Aorta (tissue), 5 donors: ENCODE measurements at regions of chr17 and their contacts with region 1.

Region 1: GRCh38 chr17:57255776-57256681 is at the start of gene MSI2:
- DNase-seq: peak; percentile 94 to 97
- ATAC-seq: peak; percentile 94
- H3K4me3 ChIP-seq: peak within 1 kb of the TSS; percentile 97
- H3K27ac ChIP-seq: peak within 1 kb of the TSS; percentile 69 to 92
- H3K4me1 ChIP-seq: peaks cover 2 to 4% of the 10 kb centered on the region in 2 donors
- H3K27me3 ChIP-seq: no peaks in the 10 kb centered on the region
- total RNA-seq, gene MSI2: 47.2 to 48.2 TPM

Region 2: DNA sequence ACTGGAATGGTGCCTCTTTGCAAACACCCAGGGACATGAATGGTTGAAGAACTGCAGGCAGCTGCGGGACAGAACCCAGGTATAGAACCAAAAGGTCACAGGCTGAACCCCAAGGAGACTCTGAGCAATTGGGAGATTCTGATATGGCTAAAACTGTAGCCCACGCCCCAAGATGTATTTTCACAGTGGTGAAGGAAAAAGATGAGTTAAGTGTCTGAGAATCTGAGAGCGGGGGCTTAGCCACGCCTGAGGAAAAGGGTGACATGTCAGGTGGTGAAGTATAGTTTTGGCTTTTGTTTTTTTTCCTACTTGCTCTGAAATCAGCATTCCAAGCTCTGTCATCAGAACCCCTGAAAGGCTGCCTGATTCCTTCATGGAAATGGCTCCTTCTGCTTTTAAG is 97.7 kb before region 1 on chr17:
- intact Hi-C with region 1: no loop called
- DNase-seq: no peak
- ATAC-seq: no peak
- H3K4me3 ChIP-seq: no peak overlapping the region
- H3K27ac ChIP-seq: no peak overlapping the region
- H3K4me1 ChIP-seq: no peaks in the 10 kb centered on the region
- H3K27me3 ChIP-seq: no peaks in the 10 kb centered on the region

Region 3: GRCh38 chr17:57174591-57174990 is 81.4 kb before region 1 on chr17:
- intact Hi-C with region 1: no loop called
- DNase-seq: no peak
- ATAC-seq: no peak
- H3K4me3 ChIP-seq: no peak overlapping the region
- H3K27ac ChIP-seq: no peak overlapping the region
- H3K4me1 ChIP-seq: no peaks in the 10 kb centered on the region
- H3K27me3 ChIP-seq: no peaks in the 10 kb centered on the region

Region 4: GRCh38 chr17:57401556-57402488 is 145.8 kb after region 1 on chr17:
- intact Hi-C with region 1: no loop called
- DNase-seq: no peak
- ATAC-seq: no peak
- H3K4me3 ChIP-seq: no peak overlapping the region
- H3K27ac ChIP-seq: no peak overlapping the region
- H3K4me1 ChIP-seq: peaks cover 2 to 7% of the 10 kb centered on the region in 2 donors
- H3K27me3 ChIP-seq: no peaks in the 10 kb centered on the region

Region 5: GRCh38 chr17:57440522-57441485 is 184.8 kb after region 1 on chr17:
- intact Hi-C with region 1: loop called in 1 of 2 experiments (anchors 10 kb)
- DNase-seq: peak; percentile 69 to 77
- ATAC-seq: peak; percentile 74
- H3K4me3 ChIP-seq: no peak overlapping the region
- H3K27ac ChIP-seq: peak overlapping the region in 1 of 2 donors; percentile 41
- H3K4me1 ChIP-seq: peaks cover 0 to 3% of the 10 kb centered on the region in 2 donors
- H3K27me3 ChIP-seq: no peaks in the 10 kb centered on the region

Region 6: GRCh38 chr17:57541472-57542394 is 285.7 kb after region 1 on chr17:
- intact Hi-C with region 1: loop called in 1 of 2 experiments (anchors 10 kb)
- DNase-seq: peak; percentile 76 to 86
- ATAC-seq: peak; percentile 85
- H3K4me3 ChIP-seq: no peak overlapping the region
- H3K27ac ChIP-seq: no peak overlapping the region
- H3K4me1 ChIP-seq: no peaks in the 10 kb centered on the region
- H3K27me3 ChIP-seq: no peaks in the 10 kb centered on the region

Region 7: DNA sequence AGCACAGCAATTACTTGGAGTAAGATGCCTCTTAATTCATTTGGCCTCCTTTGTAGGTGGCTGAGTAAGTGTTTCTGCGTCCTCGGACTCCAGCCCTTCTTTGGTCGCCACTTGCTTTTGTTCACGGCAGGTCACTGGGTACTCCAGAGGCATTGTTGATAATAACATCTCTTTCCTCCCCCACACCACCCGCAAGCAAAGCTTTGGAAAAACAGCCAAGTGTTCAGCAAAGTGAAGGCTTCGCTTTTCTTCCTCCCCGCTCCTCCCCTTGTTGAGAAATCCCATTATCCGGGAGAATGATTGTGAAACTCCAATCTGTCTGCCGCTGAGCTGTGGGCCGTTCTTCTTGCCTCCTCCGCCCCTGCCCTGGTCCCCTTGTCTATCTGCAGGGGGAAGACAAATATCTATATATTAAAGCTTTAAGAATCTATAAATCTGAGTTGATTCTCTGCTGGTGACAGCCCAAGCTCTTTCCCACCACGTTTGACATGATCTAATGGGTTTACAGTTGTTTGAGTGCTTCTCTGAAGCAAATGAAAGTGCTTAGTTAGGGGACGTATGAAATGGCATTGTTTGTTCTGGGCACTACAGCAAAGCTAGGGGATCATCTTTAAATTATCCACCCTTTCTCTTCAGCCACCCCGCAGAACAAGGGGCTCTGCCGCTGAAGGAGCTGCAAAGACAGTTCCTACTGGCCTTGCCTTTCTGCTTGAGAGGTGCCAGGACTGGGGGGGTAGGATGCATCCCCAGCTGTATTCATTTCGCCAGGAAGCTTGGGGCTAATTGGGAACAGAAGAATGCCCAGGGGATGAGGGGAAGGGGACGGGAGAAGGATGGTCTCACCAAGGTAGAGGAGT is 321.9 kb after region 1 on chr17:
- intact Hi-C with region 1: loop called in 1 of 2 experiments (anchors 10 kb)
- DNase-seq: no peak
- ATAC-seq: peak; percentile 72
- H3K4me3 ChIP-seq: no peak overlapping the region
- H3K27ac ChIP-seq: no peak overlapping the region
- H3K4me1 ChIP-seq: peaks cover 0 to 1% of the 10 kb centered on the region in 2 donors
- H3K27me3 ChIP-seq: no peaks in the 10 kb centered on the region